Left ventricle myocardium superior (tissue), 1 donor: ENCODE measurements at regions of chr5 and their contacts with region 1.

Region 1: DNA sequence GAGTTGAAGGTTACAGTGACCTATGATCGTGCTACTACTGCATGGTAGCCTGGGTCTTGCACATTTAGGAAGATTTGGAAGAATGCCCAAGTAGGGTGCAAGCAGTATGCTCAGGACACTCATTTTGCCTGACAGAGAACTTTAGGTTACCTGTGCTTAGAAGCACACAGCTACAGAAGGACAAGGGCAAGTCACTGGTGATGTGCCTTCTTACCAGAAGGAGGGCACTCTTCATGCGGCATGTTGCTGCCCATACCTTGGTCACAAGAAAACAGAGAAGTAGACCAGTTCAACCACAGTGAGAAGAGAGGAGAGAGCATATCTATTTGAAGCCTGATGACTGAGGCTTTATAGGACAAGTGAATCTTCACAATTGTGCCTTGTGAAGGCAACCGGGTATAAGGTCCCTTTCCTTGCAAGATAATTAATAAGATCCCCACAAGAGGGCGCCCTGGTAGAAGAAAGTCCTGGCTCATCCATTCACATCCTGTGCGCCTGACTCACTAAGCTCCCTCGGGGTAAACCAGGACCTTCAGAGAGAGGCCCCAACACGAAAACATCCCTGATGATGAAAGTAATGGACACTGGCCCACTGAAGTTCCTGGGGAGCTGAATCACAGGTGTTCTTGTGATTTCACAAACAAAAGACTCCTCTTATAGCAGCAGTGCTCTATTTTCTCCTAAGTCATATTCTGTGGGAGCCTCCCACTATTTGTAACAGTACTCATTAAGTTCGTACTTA is 38.1 kb upstream of the STARD4 start:
- DNase-seq: peak; percentile 43
- ATAC-seq: peak; percentile 93

Region 2: DNA sequence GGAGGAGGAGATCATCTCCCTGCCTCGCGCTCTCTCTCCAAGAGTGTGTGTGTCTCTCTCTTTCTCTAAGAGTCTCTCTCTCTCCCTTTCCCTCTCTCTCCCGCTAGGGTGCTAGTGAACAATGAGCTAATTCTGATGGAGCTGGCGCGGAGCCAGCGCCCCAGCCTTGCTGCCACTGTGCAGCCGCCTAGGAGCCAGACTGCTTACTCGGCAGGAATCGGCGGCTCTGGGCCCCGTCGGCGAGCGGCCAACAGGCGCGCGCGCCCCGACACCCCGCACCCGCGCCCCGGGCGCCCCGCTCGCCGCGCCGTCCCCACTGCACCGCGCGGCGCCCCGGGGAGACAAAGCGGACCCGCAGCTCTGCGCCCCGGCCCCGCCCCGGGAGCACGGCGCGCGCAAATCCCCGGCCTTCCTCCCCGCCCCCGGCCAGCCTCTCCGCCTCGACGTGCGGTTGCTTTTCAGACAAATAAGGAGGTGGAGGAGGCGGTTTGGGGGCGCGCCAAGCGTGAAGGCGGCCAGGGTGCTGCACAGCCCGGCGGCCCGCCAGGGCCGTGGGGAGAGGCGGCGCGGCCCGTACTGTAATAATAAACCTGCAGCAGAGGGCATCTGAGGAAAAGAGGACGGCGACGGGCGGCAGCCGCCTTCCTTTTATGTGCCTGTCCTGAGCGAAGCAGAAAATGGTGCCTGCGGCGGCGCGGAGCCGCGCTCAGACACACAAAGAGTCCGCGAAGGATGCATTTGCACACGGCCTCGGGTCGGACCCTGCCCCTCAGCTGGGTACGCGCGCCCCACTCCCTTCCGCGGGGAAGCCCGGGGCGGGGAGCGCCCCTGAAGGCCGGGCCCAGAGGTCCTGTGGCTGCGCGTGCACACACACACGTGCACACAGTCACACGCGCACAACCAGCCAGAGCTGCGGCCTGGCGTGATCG is 207.2 kb after region 1 on chr5:
- intact Hi-C with region 1: loop called (anchors 10 kb)
- DNase-seq: peak; percentile 98
- ATAC-seq: peak; percentile 91

Region 3: DNA sequence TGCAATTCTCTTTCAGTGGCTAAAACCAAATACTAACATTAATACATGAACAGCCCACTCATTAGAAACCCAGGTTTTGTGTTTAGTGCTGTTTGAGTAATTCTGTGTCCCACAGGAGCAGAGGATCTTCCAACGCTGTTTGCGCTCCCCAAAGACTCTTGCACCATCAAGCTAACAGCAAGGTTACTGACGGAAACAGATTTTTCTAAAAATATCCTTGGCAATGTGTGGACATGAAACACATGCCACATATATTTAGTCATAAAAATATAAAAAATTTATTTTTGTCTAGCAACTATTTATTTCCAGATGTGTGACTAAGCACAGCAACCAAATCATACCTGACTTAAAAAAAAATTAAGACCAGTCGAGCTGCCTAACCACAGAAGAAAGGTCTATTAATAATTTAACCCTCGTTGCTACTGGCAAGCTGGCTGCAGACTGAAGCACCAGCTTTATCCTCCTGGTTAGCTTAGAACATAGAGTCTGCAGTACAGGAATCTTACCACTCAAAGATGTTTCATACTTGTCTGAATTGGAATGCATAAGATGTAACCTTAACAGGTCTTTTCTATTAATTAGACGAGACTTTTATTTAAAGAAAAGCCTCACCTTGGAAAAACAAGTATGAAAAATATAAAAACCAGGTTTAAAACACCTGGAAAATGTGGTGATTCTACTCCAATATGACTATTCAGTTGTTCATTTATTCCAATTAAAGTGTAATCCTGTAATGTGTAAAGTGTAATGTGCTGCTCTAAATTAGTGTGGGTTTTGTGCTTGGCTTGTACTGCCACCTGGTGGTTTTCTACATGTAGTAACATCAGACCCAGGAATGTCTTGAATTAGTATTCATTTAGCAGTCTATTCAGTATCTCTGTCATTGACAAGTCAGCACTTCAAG is 596.1 kb after region 1 on chr5:
- intact Hi-C with region 1: loop called (anchors 5 kb)
- DNase-seq: no peak
- ATAC-seq: peak; percentile 86